Panc1 (cell line): ENCODE measurements at regions of chr12 and their contacts with region 1.

Region 1: GRCh38 chr12:65306366-65307168 is 28.1 kb downstream of the MSRB3 start:
- DNase-seq: peak; percentile 38
- ATAC-seq: peak; percentile 88
- H3K4me3 ChIP-seq: 0 out of 4 replicates have a peak overlapping the region, but pooled peaks of 1 of the 2 experiments have one; percentile 1
- H3K27ac ChIP-seq: peak overlapping the region; percentile 68
- H3K4me1 ChIP-seq: peaks cover 32% of the 10 kb centered on the region
- H3K27me3 ChIP-seq: no peaks in the 10 kb centered on the region
- CTCF ChIP-seq: peak; percentile 84

Region 2: DNA sequence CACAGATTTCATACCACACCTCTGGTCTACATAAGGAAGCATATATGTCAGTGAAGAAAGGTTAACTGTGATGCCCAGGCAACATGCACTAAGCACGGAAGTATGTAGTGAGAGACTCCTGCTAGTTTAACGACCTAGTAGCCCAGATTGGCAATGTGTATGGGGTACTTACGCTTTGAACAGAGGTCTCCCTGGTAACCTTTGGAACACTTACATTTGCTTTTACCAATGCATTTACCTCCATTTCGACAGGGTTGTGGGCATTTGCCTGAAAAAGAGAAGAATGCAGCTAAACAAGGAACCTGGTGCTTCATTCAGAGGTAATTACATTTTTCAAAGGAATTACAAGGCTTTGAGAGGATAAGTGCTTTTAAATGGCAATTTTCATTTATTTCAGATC is 250.7 kb before region 1 on chr12:
- CTCF ChIA-PET with region 1: no interaction called
- POLR2A ChIA-PET with region 1: no interaction called
- in situ Hi-C with region 1: no loop called
- intact Hi-C with region 1: no loop called
- DNase-seq: no peak
- ATAC-seq: no peak
- H3K4me3 ChIP-seq: no peak overlapping the region
- H3K27ac ChIP-seq: no peak overlapping the region
- H3K4me1 ChIP-seq: no peaks in the 10 kb centered on the region
- H3K27me3 ChIP-seq: peaks cover 14% of the 10 kb centered on the region
- CTCF ChIP-seq: no peak

Region 3: DNA sequence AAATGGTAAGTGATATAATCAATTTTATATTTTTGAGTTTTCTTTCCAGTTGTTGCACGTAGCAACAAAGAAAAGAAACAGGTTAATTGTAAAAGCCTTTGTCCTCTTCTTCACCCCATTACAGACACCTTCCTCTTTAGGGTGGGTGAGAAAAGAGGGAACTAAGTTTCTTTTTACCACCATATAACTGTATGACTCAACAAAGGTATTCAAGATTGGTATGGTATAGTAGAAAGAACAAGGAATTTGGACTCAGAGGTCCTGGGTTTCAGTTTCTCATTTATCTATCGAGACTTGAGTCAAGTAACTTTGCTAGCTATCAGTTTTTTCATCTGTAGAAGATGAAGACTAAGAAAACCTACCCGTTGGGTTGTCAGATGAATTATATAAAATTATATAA is 142.8 kb before region 1 on chr12:
- CTCF ChIA-PET with region 1: no interaction called
- POLR2A ChIA-PET with region 1: no interaction called
- in situ Hi-C with region 1: no loop called
- intact Hi-C with region 1: no loop called
- DNase-seq: no peak
- ATAC-seq: no peak
- H3K4me3 ChIP-seq: no peak overlapping the region
- H3K27ac ChIP-seq: no peak overlapping the region
- H3K4me1 ChIP-seq: no peaks in the 10 kb centered on the region
- H3K27me3 ChIP-seq: peaks cover 16% of the 10 kb centered on the region; the same call in 1 of the 2 replicates
- CTCF ChIP-seq: no peak

Region 4: DNA sequence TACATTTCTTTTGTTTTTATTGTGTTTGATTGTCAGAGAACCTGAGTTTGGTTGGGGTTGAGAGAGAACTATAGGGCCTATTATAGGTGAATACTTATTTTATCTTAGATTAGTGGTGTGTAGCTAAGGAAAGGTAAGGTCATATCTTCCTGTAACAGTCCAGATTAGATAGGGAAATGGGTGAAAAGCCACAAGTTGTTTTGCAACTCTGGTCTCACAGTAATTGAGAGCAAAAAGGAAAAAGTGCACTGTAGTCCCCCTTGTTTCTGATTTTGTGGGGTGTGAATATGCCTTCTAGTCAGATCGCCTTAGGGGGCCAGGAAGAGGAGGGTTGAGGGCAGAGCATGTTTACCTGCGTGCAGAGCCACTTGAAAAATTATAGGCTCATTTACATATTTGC is 19.1 kb before region 1 on chr12:
- CTCF ChIA-PET with region 1: interaction called, 4 read pairs
- POLR2A ChIA-PET with region 1: interaction called, 19 read pairs
- in situ Hi-C with region 1: no loop called
- intact Hi-C with region 1: no loop called
- DNase-seq: no peak
- ATAC-seq: no peak
- H3K4me3 ChIP-seq: no peak overlapping the region
- H3K27ac ChIP-seq: no peak overlapping the region
- H3K4me1 ChIP-seq: peaks cover 3% of the 10 kb centered on the region; the same call in 1 of the 2 replicates
- H3K27me3 ChIP-seq: no peaks in the 10 kb centered on the region
- CTCF ChIP-seq: no peak

Region 5: GRCh38 chr12:65525491-65526161 is 219.1 kb after region 1 on chr12:
- CTCF ChIA-PET with region 1: no interaction called
- POLR2A ChIA-PET with region 1: no interaction called
- in situ Hi-C with region 1: no loop called
- intact Hi-C with region 1: no loop called
- DNase-seq: no peak
- ATAC-seq: no peak
- H3K4me3 ChIP-seq: no peak overlapping the region
- H3K27ac ChIP-seq: 0 out of 2 replicates have a peak overlapping the region, but pooled peaks have one; percentile 19
- H3K4me1 ChIP-seq: no peaks in the 10 kb centered on the region
- H3K27me3 ChIP-seq: no peaks in the 10 kb centered on the region
- CTCF ChIP-seq: no peak

Region 6: DNA sequence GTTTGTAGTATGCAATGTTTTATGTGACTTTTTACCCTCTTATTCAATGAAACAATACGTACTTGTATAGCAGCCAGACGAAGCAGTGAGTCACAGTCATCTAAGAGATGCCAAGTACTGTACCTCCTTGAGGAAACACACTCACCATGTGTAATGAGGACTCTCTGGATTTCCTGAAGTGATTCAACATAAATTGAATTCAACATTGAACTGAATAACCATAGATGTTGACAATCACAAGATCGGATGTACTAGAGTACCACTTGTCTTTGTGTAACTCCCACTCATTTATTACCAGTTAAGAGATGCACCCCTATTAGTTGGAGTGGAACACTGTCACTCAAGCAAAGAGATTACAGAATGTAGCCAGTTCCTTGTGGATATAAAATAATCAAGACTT is 342.6 kb after region 1 on chr12:
- CTCF ChIA-PET with region 1: no interaction called
- POLR2A ChIA-PET with region 1: no interaction called
- in situ Hi-C with region 1: no loop called
- intact Hi-C with region 1: no loop called
- DNase-seq: peak; percentile 82
- ATAC-seq: peak; percentile 99
- H3K4me3 ChIP-seq: no peak overlapping the region
- H3K27ac ChIP-seq: peak overlapping the region; percentile 66
- H3K4me1 ChIP-seq: peaks cover 6% of the 10 kb centered on the region; the same call in 1 of the 2 replicates
- H3K27me3 ChIP-seq: no peaks in the 10 kb centered on the region
- CTCF ChIP-seq: no peak

Region 7: DNA sequence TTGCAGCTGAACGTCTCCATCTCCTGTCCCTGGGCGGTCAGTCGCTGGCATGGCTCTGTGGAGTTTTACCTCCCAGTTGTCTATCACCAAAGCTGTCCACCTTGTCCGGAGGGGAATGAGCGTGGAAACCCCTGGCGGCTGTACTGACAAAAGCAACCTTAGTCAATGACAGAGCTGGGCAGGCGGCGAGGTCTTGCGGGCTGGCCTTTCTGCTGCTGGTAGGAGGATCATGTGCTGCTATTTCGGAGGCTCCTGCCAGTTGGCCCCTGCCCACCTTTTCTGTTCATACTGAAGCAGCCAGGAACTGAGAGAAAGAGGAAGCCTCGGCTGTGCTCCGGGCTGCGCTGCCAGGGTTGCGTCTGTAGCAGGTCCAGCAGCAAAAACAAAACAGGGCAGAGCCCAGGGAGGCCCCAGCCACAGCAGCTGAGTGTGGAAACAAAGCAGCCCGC is 575.4 kb after region 1 on chr12:
- CTCF ChIA-PET with region 1: no interaction called
- POLR2A ChIA-PET with region 1: no interaction called
- in situ Hi-C with region 1: no loop called
- intact Hi-C with region 1: loop called (anchors 5 kb)
- DNase-seq: no peak
- ATAC-seq: peak; percentile 24
- H3K4me3 ChIP-seq: no peak overlapping the region; a peak in 1 of 4 replicates
- H3K27ac ChIP-seq: peak overlapping the region; percentile 98
- H3K4me1 ChIP-seq: peaks cover 89% of the 10 kb centered on the region
- H3K27me3 ChIP-seq: no peaks in the 10 kb centered on the region
- CTCF ChIP-seq: no peak

Region 8: GRCh38 chr12:66087365-66087943 is 780.9 kb after region 1 on chr12:
- CTCF ChIA-PET with region 1: no interaction called
- POLR2A ChIA-PET with region 1: no interaction called
- in situ Hi-C with region 1: no loop called
- intact Hi-C with region 1: loop called (anchors 10 kb)
- DNase-seq: peak; percentile 57
- ATAC-seq: peak; percentile 91
- H3K4me3 ChIP-seq: no peak overlapping the region
- H3K27ac ChIP-seq: peak overlapping the region; percentile 69; the same call in 1 of the 2 replicates
- H3K4me1 ChIP-seq: peaks cover 10% of the 10 kb centered on the region; the same call in 1 of the 2 replicates
- H3K27me3 ChIP-seq: no peaks in the 10 kb centered on the region
- CTCF ChIP-seq: peak; percentile 88

Region 9: DNA sequence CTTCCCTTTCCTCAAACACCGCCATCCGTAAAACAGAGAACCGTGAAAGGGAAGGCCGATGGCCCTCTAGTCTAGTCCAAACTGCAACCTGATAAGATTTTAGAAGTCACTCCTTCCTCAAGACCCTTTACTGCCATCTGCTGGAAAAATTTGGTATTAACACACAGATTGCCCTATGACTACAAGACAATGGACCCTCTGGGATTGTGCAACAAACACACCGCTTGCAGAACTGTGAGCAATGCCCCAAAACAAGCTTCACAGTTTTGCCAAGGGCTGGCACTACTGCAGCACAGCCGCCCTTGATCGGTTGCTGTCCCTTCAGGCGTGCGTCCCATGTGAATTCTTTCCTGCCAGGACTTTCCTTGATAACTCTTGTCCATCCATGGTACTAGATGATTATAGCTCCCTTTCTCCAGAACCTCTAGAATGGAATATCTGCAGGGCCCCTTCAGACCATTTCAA is 800.9 kb after region 1 on chr12:
- CTCF ChIA-PET with region 1: interaction called, 4 read pairs
- POLR2A ChIA-PET with region 1: no interaction called
- in situ Hi-C with region 1: no loop called
- intact Hi-C with region 1: loop called (anchors 5 kb)
- DNase-seq: peak; percentile 82
- ATAC-seq: peak; percentile 95
- H3K4me3 ChIP-seq: no peak overlapping the region
- H3K27ac ChIP-seq: peak overlapping the region; percentile 60; the same call in 1 of the 2 replicates
- H3K4me1 ChIP-seq: no peaks in the 10 kb centered on the region
- H3K27me3 ChIP-seq: no peaks in the 10 kb centered on the region
- CTCF ChIP-seq: peak; percentile 84